GM13977 (cell line): ENCODE measurements at regions of chr14 and their contacts with region 1.

Region 1: GRCh38 chr14:28751467-28752058 is 15.0 kb upstream of the FOXG1 start:
- DNase-seq: no peak
- CTCF ChIP-seq: peak; percentile 77

Region 2: DNA sequence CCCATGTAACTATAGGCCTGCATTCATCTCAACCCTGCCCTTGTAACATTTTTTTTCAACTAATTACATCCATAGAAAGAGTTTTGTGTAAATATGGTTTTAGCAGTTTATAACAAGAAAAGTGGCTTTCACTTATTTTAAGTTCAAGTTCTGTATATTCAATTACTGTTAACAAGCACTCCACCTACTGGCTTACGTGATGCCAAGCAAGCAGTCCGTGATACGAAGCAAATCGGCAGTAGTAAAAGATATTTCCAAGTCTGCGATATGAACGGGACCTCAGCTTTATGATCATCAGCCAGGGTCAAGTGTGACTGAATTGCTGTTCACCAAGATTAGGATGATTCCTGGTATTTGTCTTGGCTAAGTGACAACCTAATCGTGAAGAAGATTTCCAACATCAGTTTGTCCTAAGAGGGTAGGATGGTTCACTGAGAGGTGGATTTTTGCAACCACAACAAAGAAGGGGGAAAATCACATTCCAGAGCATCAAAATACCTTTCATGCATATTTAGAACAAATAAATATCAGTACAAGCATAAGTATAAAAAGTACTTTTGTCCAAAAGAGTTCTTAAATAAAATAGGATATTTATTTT is 471.2 kb after region 1 on chr14:
- in situ Hi-C with region 1: loop called (anchors 25 kb)
- DNase-seq: no peak
- CTCF ChIP-seq: peak; percentile 74

Region 3: GRCh38 chr14:29548948-29549370 is 797.4 kb after region 1 on chr14:
- in situ Hi-C with region 1: loop called (anchors 25 kb)
- DNase-seq: peak; percentile 34
- CTCF ChIP-seq: peak; percentile 60